A673 (cell line): ENCODE measurements at regions of chr4 and their contacts with region 1.

Region 1: GRCh38 chr4:33045334-33045733 is 2325.2 kb downstream of the PCDH7 start:
- DNase-seq: no peak
- H3K4me3 ChIP-seq: no peak overlapping the region
- H3K27ac ChIP-seq: no peak overlapping the region
- H3K4me1 ChIP-seq: no peaks in the 10 kb centered on the region
- H3K27me3 ChIP-seq: no peaks in the 10 kb centered on the region
- CTCF ChIP-seq: no peak

Region 2: DNA sequence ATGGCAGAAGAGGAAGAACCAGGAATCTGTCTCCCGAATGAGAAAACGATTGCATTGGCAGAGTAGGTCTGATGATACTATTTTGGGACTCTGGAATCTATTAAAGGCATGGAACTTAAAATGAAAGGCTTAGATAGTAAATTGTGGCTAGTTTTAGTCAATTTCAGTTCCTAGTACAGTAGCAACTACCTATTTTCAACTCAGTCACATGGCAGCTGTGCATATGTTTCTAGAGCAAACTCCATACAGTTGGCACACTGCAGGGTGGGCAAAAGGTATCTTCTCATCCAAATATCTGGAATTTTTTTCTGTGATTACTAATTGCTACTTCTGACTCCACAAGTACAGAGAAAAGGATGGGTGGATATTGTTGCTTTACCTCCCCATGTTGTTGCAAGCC is 1661.6 kb before region 1 on chr4:
- CTCF ChIA-PET with region 1: no interaction called
- POLR2A ChIA-PET with region 1: no interaction called
- intact Hi-C with region 1: loop called (anchors 10 kb)
- DNase-seq: no peak
- H3K4me3 ChIP-seq: no peak overlapping the region
- H3K27ac ChIP-seq: no peak overlapping the region
- H3K4me1 ChIP-seq: no peaks in the 10 kb centered on the region
- H3K27me3 ChIP-seq: no peaks in the 10 kb centered on the region
- CTCF ChIP-seq: no peak

Region 3: DNA sequence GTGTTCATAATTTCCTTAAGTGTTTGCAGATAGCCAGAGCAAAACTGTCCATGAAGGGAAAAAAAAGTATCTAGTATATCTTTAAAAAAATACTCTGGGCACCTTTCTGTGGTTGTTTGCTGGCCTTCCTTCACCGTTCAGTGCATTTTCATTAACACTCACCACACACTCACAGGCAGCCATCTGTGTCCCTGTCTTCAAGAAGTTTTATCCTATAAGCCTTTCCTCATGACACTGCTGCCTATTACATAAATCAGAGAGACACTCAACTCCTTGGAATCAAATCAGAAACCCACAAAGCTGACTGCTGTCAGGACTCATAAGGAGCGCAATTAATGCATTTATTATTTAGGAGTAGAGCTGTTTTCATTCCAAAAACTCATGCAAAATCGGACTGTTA is 604.9 kb before region 1 on chr4:
- CTCF ChIA-PET with region 1: no interaction called
- POLR2A ChIA-PET with region 1: no interaction called
- intact Hi-C with region 1: no loop called
- DNase-seq: no peak
- H3K4me3 ChIP-seq: no peak overlapping the region
- H3K27ac ChIP-seq: no peak overlapping the region
- H3K4me1 ChIP-seq: no peaks in the 10 kb centered on the region
- H3K27me3 ChIP-seq: no peaks in the 10 kb centered on the region
- CTCF ChIP-seq: no peak

Region 4: GRCh38 chr4:33349376-33349775 is 304.0 kb after region 1 on chr4:
- CTCF ChIA-PET with region 1: no interaction called
- POLR2A ChIA-PET with region 1: no interaction called
- intact Hi-C with region 1: no loop called
- DNase-seq: no peak
- H3K4me3 ChIP-seq: no peak overlapping the region
- H3K27ac ChIP-seq: no peak overlapping the region
- H3K4me1 ChIP-seq: no peaks in the 10 kb centered on the region
- H3K27me3 ChIP-seq: no peaks in the 10 kb centered on the region
- CTCF ChIP-seq: no peak